Naive thymus-derived CD4-positive, alpha-beta T cell (primary cell): ENCODE measurements at regions of chr5 and their contacts with region 1.

Region 1: GRCh38 chr5:170633235-170634081 is 129.6 kb downstream of the KCNIP1 start:
- DNase-seq: peak in 6 of 9 donors; percentile 5 to 51 (median 30)
- ATAC-seq: peak; percentile 28
- H3K4me3 ChIP-seq: peak overlapping the region; percentile 40
- H3K4me3 Mint-ChIP-seq: peak overlapping the region; percentile 68 to 92 (median 88)
- H3K27ac ChIP-seq: no peak overlapping the region
- H3K27ac Mint-ChIP-seq: peak overlapping the region in 8 of 9 donors; percentile 22 to 90 (median 72)
- H3K4me1 ChIP-seq: peaks cover 0 to 10% of the 10 kb centered on the region in 2 donors
- H3K4me1 Mint-ChIP-seq: peaks cover 8 to 26% (median 19%) of the 10 kb centered on the region in 7 donors
- H3K27me3 ChIP-seq: no peaks in the 10 kb centered on the region
- H3K27me3 Mint-ChIP-seq: peaks cover 0 to 12% (median 1%) of the 10 kb centered on the region in 5 donors

Region 2: DNA sequence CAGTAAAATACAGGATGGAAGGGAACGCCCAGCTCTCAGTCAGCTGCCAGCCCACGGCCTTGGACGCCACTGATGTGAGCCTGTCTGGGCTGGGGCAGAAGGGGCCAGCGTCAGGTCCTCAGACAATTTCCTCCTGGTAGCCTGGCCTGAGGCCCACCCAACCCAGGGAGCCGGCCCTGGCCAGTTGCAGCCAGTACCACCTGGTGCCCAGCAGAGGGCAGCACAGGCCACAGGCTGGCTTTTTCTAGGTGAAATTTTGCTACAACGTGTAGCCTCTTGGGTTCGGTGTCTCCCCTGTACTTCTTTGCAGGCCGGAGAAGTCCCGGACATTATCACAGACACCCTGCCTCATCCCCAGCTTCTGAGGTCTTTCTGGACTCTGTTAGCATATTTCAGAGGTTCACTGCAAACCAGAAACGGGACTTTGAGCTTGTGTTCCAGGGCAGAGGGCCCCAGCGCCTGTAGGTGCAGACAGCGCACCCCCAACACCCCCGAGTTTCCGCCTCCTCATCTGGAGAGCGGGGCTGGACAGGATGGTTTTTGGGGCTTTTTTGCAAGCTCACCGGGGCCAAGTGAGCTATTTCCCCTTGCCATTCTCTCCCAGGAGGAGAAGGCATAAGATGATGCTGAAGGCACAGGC is 198.4 kb before region 1 on chr5:
- CTCF ChIA-PET with region 1: interaction called, 16 read pairs
- POLR2A ChIA-PET with region 1: no interaction called
- intact Hi-C with region 1: loop called in 1 of 2 experiments (anchors 1 kb)
- DNase-seq: peak; percentile 15 to 61 (median 40)
- ATAC-seq: peak; percentile 88
- H3K4me3 ChIP-seq: no peak overlapping the region
- H3K4me3 Mint-ChIP-seq: no peak overlapping the region
- H3K27ac ChIP-seq: no peak overlapping the region
- H3K27ac Mint-ChIP-seq: no peak overlapping the region
- H3K4me1 ChIP-seq: no peaks in the 10 kb centered on the region
- H3K4me1 Mint-ChIP-seq: no peaks in the 10 kb centered on the region
- H3K27me3 ChIP-seq: no peaks in the 10 kb centered on the region
- H3K27me3 Mint-ChIP-seq: peaks cover 0 to 6% (median 0%) of the 10 kb centered on the region in 5 donors

Region 3: GRCh38 chr5:170603578-170604565 is 29.6 kb before region 1 on chr5:
- CTCF ChIA-PET with region 1: no interaction called
- POLR2A ChIA-PET with region 1: no interaction called
- intact Hi-C with region 1: loop called (anchors 1 to 2 kb)
- DNase-seq: peak in 4 of 9 donors; percentile 4 to 49 (median 8)
- ATAC-seq: no peak
- H3K4me3 ChIP-seq: no peak overlapping the region
- H3K4me3 Mint-ChIP-seq: no peak overlapping the region
- H3K27ac ChIP-seq: no peak overlapping the region
- H3K27ac Mint-ChIP-seq: no peak overlapping the region
- H3K4me1 ChIP-seq: no peaks in the 10 kb centered on the region
- H3K4me1 Mint-ChIP-seq: peaks cover 0 to 6% (median 0%) of the 10 kb centered on the region in 7 donors
- H3K27me3 ChIP-seq: no peaks in the 10 kb centered on the region
- H3K27me3 Mint-ChIP-seq: peaks cover 0 to 25% (median 19%) of the 10 kb centered on the region in 5 donors